ENCODE measurements at regions of chr3 and their contacts with region 1.

Region 1: GRCh38 chr3:119098619-119099222 is 47.2 kb upstream of the TEX55 start:
- DNase-seq: peak in 5 of 35 experiments; percentile 0 to 69 (median 13)
- ATAC-seq: peak in 1 of 4 experiments; percentile 51
- H3K4me3 ChIP-seq: no peak overlapping the region
- H3K4me3 Mint-ChIP-seq: no peak overlapping the region
- H3K27ac ChIP-seq: no peak overlapping the region
- H3K27ac Mint-ChIP-seq: no peak overlapping the region
- H3K4me1 ChIP-seq: no peaks in the 10 kb centered on the region
- H3K4me1 Mint-ChIP-seq: no peaks in the 10 kb centered on the region
- H3K27me3 ChIP-seq: no peaks in the 10 kb centered on the region
- H3K27me3 Mint-ChIP-seq: no peaks in the 10 kb centered on the region

Region 2: GRCh38 chr3:118997190-118997589 is 101.5 kb before region 1 on chr3:
- CTCF ChIA-PET with region 1: interaction called in 1 of 2 experiments, 13 read pairs
- POLR2A ChIA-PET with region 1: no interaction called
- DNase-seq: no peak
- ATAC-seq: no peak
- H3K4me3 ChIP-seq: no peak overlapping the region
- H3K4me3 Mint-ChIP-seq: no peak overlapping the region
- H3K27ac ChIP-seq: no peak overlapping the region
- H3K27ac Mint-ChIP-seq: no peak overlapping the region
- H3K4me1 ChIP-seq: no peaks in the 10 kb centered on the region
- H3K4me1 Mint-ChIP-seq: no peaks in the 10 kb centered on the region
- H3K27me3 ChIP-seq: no peaks in the 10 kb centered on the region
- H3K27me3 Mint-ChIP-seq: no peaks in the 10 kb centered on the region

Region 3: DNA sequence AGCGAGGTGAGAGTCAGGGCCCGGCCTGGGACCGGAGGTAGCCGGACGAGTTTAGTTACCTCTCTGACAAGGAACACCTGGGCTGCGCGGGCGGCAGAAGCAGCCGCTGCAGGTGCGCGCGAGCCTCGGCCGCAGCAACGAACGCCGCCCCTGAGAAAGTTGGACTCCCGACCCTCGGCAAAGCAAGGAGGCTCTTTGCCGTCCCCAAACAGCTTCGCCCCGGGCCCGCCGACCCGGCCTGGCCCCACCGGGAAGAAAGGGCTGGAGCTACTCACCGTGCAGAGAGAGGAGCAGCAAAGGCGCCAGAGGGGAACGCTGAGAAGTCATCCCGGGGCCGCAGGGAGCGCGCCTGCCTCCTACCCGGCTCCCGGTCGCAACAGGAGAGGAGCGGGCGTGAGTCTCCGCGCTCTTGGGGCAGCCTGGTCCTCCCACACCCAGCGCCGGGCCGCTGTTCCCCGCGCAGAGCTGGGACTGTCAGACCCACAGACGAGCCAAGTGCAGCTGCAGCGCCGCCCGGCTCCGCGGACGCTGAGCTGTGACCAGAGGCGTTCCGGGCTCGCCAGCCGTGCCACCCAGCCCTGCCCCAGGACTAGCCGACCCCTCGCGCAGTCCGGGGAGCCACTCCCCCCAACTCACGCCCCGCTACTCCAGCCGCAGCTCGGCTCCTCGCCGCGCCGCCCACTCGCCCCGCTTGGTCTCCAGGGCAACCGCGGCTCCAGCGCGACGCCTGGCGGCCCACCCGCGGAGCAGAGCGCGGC is 64.3 kb before region 1 on chr3 and contains the start of gene IGSF11:
- CTCF ChIA-PET with region 1: interaction called, 10 to 11 read pairs
- POLR2A ChIA-PET with region 1: no interaction called
- DNase-seq: peak; percentile 11 to 75 (median 50)
- ATAC-seq: peak; percentile 92 to 95 (median 93)
- H3K4me3 ChIP-seq: peak within 1 kb of the TSS; percentile 62 to 90
- H3K4me3 Mint-ChIP-seq: peak within 1 kb of the TSS; percentile 86 to 90 (median 87)
- H3K27ac ChIP-seq: no peak within 1 kb of the TSS
- H3K27ac Mint-ChIP-seq: no peak within 1 kb of the TSS
- H3K4me1 ChIP-seq: peaks cover 2 to 9% of the 10 kb centered on the region in 2 experiments
- H3K4me1 Mint-ChIP-seq: peaks cover 8 to 14% (median 14%) of the 10 kb centered on the region in 3 donors
- H3K27me3 ChIP-seq: peaks cover 6 to 21% of the 10 kb centered on the region in 2 experiments
- H3K27me3 Mint-ChIP-seq: peaks cover 38 to 45% of the 10 kb centered on the region in 2 donors
- total RNA-seq, gene IGSF11: 0.20 to 0.70 (median 0.41) TPM